ENCODE measurements at regions of chr17 and their contacts with region 1.

Region 1: DNA sequence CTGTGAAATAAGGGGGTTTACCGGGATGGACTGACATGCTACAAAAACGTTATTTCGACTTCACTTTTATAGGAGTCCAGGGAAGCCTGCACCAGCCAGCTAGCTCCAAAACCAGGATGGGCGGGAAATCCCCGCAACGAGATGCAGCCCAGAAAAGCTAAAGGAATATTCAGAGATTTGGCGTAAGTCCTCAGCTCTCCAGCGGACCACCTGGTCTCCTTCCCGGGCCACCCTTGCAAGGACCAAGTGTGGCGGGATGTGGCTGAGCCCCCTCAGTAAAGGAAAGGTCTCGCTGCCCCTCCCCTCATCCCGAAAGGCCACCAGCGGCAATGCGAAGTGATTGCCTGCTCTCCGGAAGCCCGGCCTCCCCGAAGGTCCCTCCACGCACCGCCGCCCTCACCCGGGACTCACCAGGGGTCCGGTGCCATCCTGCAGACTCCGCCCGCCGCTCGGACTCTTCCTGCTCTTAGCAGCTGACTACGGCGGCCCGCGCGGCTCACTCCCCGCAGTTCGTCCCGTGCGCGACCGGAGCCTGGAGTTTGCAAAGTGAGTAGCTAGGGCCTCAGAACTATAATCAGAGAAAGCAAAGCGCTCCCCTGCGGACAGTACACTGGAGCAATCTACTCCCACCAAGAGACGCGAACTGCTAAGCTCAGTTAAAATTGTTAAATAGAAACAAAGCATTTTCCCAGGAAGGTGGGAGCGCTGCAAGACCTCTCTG is at the start of gene STX8:
- DNase-seq: peak; percentile 89
- ATAC-seq: peak; percentile 81
- H3K4me3 Mint-ChIP-seq: peak within 1 kb of the TSS; percentile 98
- H3K27ac Mint-ChIP-seq: peak within 1 kb of the TSS; percentile 79
- H3K4me1 Mint-ChIP-seq: peaks cover 20% of the 10 kb centered on the region
- H3K27me3 Mint-ChIP-seq: no peaks in the 10 kb centered on the region
- total RNA-seq, gene STX8: 57.9 to 74.2 TPM

Region 2: GRCh38 chr17:9615486-9615885 is 39.9 kb after region 1 on chr17:
- CTCF ChIA-PET with region 1: no interaction called
- DNase-seq: no peak
- ATAC-seq: no peak
- H3K4me3 Mint-ChIP-seq: no peak overlapping the region
- H3K27ac Mint-ChIP-seq: no peak overlapping the region
- H3K4me1 Mint-ChIP-seq: no peaks in the 10 kb centered on the region
- H3K27me3 Mint-ChIP-seq: peaks cover 8% of the 10 kb centered on the region

Region 3: GRCh38 chr17:9658593-9659211 is 83.2 kb after region 1 on chr17:
- CTCF ChIA-PET with region 1: no interaction called
- DNase-seq: no peak
- ATAC-seq: no peak
- H3K4me3 Mint-ChIP-seq: no peak overlapping the region
- H3K27ac Mint-ChIP-seq: no peak overlapping the region
- H3K4me1 Mint-ChIP-seq: no peaks in the 10 kb centered on the region
- H3K27me3 Mint-ChIP-seq: peaks cover 17% of the 10 kb centered on the region

Region 4: GRCh38 chr17:9676742-9677387 is 101.3 kb after region 1 on chr17:
- CTCF ChIA-PET with region 1: interaction called, 24 read pairs
- DNase-seq: peak; percentile 40
- ATAC-seq: peak; percentile 30
- H3K4me3 Mint-ChIP-seq: no peak overlapping the region
- H3K27ac Mint-ChIP-seq: no peak overlapping the region
- H3K4me1 Mint-ChIP-seq: peaks cover 9% of the 10 kb centered on the region
- H3K27me3 Mint-ChIP-seq: peaks cover 8% of the 10 kb centered on the region

Region 5: GRCh38 chr17:9750524-9750923 is 175.0 kb after region 1 on chr17:
- CTCF ChIA-PET with region 1: interaction called, 11 read pairs
- DNase-seq: no peak
- ATAC-seq: no peak
- H3K4me3 Mint-ChIP-seq: no peak overlapping the region
- H3K27ac Mint-ChIP-seq: no peak overlapping the region
- H3K4me1 Mint-ChIP-seq: no peaks in the 10 kb centered on the region
- H3K27me3 Mint-ChIP-seq: peaks cover 15% of the 10 kb centered on the region

Region 6: DNA sequence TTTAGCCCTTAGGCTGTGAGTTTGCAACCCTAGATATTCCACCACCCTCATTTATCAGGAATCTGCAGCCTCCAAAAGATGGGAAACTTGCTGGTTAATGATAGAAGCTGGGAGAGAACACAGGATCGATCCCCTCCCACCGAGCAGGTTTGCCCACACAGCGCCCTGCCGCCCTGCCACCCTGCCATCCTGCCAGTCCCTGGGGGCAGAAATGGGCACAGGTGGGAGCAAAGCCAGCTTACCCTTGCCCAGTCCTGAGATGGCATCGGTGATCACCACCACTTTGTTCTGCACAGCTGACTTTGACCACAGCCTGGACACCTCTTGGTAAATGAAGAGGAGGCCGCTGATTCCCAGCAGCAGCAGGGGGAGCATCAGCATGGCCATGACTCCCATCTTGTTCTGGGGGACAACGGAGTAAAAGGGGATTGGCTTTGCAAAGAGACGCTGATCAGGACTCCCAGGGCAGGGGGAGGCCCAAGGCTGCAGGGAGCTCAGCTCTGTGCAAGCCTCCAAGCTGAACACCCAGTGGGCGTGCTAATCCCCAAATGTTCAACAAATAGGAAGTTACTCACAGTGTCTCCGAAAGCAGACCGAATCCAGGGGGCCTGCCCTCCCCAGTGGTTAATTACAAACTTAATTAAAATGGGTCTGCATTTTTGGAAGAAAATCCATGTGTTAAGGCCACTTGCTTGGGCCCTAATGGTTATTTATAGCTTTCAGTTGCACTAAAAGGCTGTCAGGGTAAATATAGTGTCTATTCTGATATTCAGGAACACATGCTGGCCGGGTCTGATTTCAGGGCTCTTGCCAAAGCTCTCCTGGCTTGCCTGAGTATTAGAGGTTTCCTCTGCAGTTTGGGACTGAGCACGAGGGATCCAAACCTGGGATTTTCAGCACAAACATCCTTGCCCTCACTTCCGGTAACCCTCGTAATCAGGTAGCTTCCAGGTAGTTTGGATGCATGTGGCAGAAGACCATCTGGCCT is 215.6 kb after region 1 on chr17 and contains the start of gene DHRS7C:
- CTCF ChIA-PET with region 1: no interaction called
- DNase-seq: no peak
- ATAC-seq: no peak
- H3K4me3 Mint-ChIP-seq: no peak within 1 kb of the TSS
- H3K27ac Mint-ChIP-seq: no peak within 1 kb of the TSS
- H3K4me1 Mint-ChIP-seq: no peaks in the 10 kb centered on the region
- H3K27me3 Mint-ChIP-seq: no peaks in the 10 kb centered on the region
- total RNA-seq, gene DHRS7C: not detected

Measured in activated CD8-positive, alpha-beta memory T cell treated with anti-CD3 and anti-CD28 coated beads, Interleukin-2, amount 10 ng/mL, durations not matched to agents 7 days and 5 days (primary cell).